ENCODE measurements at regions of chr20 and their contacts with region 1.

Region 1: GRCh38 chr20:63280929-63281545 is 8.4 kb downstream of the ARFGAP1 start:
- DNase-seq: no peak
- H3K4me3 ChIP-seq: no peak overlapping the region
- H3K27ac ChIP-seq: no peak overlapping the region
- H3K4me1 ChIP-seq: no peaks in the 10 kb centered on the region
- H3K27me3 ChIP-seq: no peaks in the 10 kb centered on the region
- CTCF ChIP-seq: peak; percentile 74 to 84 (median 83)
- EP300 ChIP-seq: no peak
- POLR2A ChIP-seq: no peak
- RAD21 ChIP-seq: peak; percentile 51 to 63

Region 2: GRCh38 chr20:63246490-63247288 is 34.3 kb before region 1 on chr20:
- CTCF ChIA-PET with region 1: interaction called, 13 read pairs
- POLR2A ChIA-PET with region 1: no interaction called
- DNase-seq: peak in 1 of 2 experiments; percentile 72
- H3K4me3 ChIP-seq: no peak overlapping the region
- H3K27ac ChIP-seq: no peak overlapping the region
- H3K4me1 ChIP-seq: peaks cover 0 to 20% (median 12%) of the 10 kb centered on the region in 4 experiments; a peak in 4 of 7 replicates
- H3K27me3 ChIP-seq: peaks cover 0 to 1% (median under 1%) of the 10 kb centered on the region in 4 experiments; a peak in 4 of 7 replicates
- CTCF ChIP-seq: 0 out of 4 replicates have a peak, but pooled peaks of 1 of the 3 experiments have one; percentile 5
- EP300 ChIP-seq: no peak
- POLR2A ChIP-seq: no peak
- RAD21 ChIP-seq: no peak

Region 3: GRCh38 chr20:63261060-63261794 is 19.8 kb before region 1 on chr20:
- CTCF ChIA-PET with region 1: interaction called, 19 read pairs
- POLR2A ChIA-PET with region 1: no interaction called
- DNase-seq: no peak
- H3K4me3 ChIP-seq: no peak overlapping the region
- H3K27ac ChIP-seq: no peak overlapping the region
- H3K4me1 ChIP-seq: peaks cover 0 to under 1% (median under 1%) of the 10 kb centered on the region in 4 experiments; a peak in 2 of 7 replicates
- H3K27me3 ChIP-seq: peaks cover 0 to 8% (median 1%) of the 10 kb centered on the region in 4 experiments; a peak in 3 of 7 replicates
- CTCF ChIP-seq: no peak
- EP300 ChIP-seq: no peak
- POLR2A ChIP-seq: no peak
- RAD21 ChIP-seq: no peak

Region 4: GRCh38 chr20:63337786-63338420 is 56.9 kb after region 1 on chr20:
- CTCF ChIA-PET with region 1: no interaction called
- POLR2A ChIA-PET with region 1: no interaction called
- DNase-seq: no peak
- H3K4me3 ChIP-seq: no peak overlapping the region
- H3K27ac ChIP-seq: no peak overlapping the region
- H3K4me1 ChIP-seq: no peaks in the 10 kb centered on the region; a peak in 2 of 7 replicates
- H3K27me3 ChIP-seq: peaks cover 0 to 6% (median 0%) of the 10 kb centered on the region in 4 experiments; a peak in 3 of 7 replicates
- CTCF ChIP-seq: no peak
- EP300 ChIP-seq: no peak
- POLR2A ChIP-seq: no peak
- RAD21 ChIP-seq: no peak

Region 5: DNA sequence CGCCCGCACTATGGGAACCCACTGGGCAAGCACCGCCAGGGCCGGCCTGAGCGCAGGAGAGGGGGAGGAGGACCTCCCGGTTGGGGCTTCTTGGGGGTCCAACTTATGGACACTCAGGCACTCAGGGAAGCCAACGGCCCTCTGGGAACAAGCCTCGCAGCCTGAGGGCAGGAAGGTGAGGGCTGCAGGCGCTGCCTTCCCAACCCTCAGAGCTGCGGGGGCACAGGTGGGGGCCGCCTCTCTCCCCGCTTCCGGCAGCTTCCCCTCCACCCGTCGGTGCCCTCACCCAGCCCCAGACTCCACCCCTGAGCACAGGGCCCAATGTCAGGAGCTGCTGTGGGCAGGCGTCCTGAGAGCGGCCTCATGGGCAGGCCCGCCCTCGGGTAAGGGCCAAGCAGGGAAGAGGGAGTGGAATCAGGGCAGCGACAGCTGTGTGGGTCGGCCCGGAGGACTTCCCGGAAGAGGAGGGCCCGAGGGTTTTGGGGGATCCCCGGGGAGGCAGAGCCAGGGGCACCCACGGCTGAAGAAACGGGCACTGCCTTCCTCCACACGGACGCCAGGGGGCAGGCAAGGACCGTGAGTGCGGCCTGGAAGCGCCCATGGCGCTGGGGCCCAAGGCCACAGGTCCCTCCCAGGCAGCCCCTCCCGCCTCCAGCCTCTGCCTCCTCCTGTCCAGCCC is 256.6 kb after region 1 on chr20:
- CTCF ChIA-PET with region 1: no interaction called
- POLR2A ChIA-PET with region 1: no interaction called
- DNase-seq: peak; percentile 71 to 97
- H3K4me3 ChIP-seq: peak overlapping the region in 3 of 4 experiments; percentile 24 to 48 (median 25); a peak in 4 of 8 replicates
- H3K27ac ChIP-seq: no peak overlapping the region
- H3K4me1 ChIP-seq: peaks cover 0 to 23% (median 3%) of the 10 kb centered on the region in 4 experiments; a peak in 5 of 7 replicates
- H3K27me3 ChIP-seq: no peaks in the 10 kb centered on the region
- CTCF ChIP-seq: peak; percentile 92 to 95 (median 92)
- EP300 ChIP-seq: no peak
- POLR2A ChIP-seq: no peak
- RAD21 ChIP-seq: peak; percentile 96 to 98